ENCODE measurements at regions of chr11 and their contacts with region 1.

Region 1: GRCh38 chr11:117946842-117947526 is 17.8 kb upstream of the TMPRSS13 start:
- DNase-seq: peak; percentile 89
- H3K4me3 ChIP-seq: no peak overlapping the region
- H3K27ac ChIP-seq: no peak overlapping the region
- H3K4me1 ChIP-seq: peaks cover 0 to 3% (median 0%) of the 10 kb centered on the region in 4 donors
- H3K27me3 ChIP-seq: no peaks in the 10 kb centered on the region
- CTCF ChIP-seq: peak; percentile 95 to 98 (median 97)
- EP300 ChIP-seq: no peak
- POLR2A ChIP-seq: no peak

Region 2: DNA sequence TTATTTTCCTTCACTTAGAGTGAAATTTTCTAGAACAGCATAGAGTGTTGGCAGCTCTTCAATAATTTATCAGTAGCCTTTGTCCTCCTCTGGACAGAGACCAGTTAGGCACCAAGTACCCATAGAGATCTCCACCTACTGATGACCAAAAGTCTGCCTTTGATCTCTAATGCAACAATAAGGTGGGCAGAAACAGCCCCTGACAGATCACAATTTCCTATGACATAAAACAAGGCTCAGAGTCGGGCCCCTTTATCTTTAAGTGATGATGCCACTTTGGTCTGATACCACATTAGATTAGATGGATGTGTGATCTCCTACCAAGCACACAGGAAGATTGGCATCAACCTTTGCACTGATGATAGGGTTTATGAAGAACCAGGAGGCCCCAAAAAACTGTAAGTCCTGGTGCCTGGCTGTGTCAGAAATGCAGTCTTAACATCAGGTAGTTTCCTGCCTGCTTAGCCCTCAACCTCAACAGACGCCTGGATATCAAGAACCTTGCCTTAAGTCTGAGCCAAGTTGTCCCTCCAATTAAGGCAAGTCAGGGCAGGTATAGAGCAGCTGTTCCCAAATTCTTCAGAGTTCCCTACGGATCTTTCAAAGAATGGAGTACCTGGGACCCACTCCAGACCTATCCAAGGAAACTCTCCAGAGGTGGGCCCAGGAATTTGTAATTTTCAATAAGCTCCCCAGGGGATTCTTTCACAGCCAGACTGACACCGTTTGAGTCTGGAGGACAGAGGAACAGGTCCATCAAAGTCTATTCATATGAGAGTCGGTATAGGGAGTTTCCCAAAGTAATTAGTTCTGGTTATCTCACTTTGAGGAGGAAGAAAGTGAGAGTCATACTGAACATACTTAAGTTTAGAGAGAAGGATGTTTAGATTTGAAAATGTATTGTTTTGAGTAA is 99.3 kb after region 1 on chr11:
- in situ Hi-C with region 1: loop called in 3 of 4 experiments (anchors 5 to 10 kb)
- intact Hi-C with region 1: no loop called
- DNase-seq: no peak
- H3K4me3 ChIP-seq: no peak overlapping the region
- H3K27ac ChIP-seq: no peak overlapping the region
- H3K4me1 ChIP-seq: no peaks in the 10 kb centered on the region
- H3K27me3 ChIP-seq: no peaks in the 10 kb centered on the region
- CTCF ChIP-seq: no peak
- EP300 ChIP-seq: no peak
- POLR2A ChIP-seq: no peak